ENCODE measurements at regions of chr1 and their contacts with region 1.

Region 1: GRCh38 chr1:91697416-91697815 is 188.5 kb downstream of the TGFBR3 start:
- DNase-seq: no peak
- ATAC-seq: no peak
- H3K4me3 ChIP-seq: no peak overlapping the region
- H3K27ac ChIP-seq: peak overlapping the region in 6 of 12 donors; percentile 23 to 78 (median 34)
- H3K4me1 ChIP-seq: peaks cover 0 to 85% (median 49%) of the 10 kb centered on the region in 12 donors
- H3K27me3 ChIP-seq: no peaks in the 10 kb centered on the region
- CTCF ChIP-seq: no peak
- POLR2A ChIP-seq: no peak

Region 2: GRCh38 chr1:91529856-91530255 is 167.6 kb before region 1 on chr1:
- intact Hi-C with region 1: loop called in 3 of 10 experiments (anchors 10 kb)
- DNase-seq: no peak
- ATAC-seq: peak in 2 of 4 donors; percentile 61 to 67
- H3K4me3 ChIP-seq: no peak overlapping the region
- H3K27ac ChIP-seq: no peak overlapping the region
- H3K4me1 ChIP-seq: peaks cover 0 to 9% (median 0%) of the 10 kb centered on the region in 12 donors
- H3K27me3 ChIP-seq: no peaks in the 10 kb centered on the region
- CTCF ChIP-seq: peak in 7 of 12 donors; percentile 21 to 58 (median 32)
- POLR2A ChIP-seq: no peak

Region 3: DNA sequence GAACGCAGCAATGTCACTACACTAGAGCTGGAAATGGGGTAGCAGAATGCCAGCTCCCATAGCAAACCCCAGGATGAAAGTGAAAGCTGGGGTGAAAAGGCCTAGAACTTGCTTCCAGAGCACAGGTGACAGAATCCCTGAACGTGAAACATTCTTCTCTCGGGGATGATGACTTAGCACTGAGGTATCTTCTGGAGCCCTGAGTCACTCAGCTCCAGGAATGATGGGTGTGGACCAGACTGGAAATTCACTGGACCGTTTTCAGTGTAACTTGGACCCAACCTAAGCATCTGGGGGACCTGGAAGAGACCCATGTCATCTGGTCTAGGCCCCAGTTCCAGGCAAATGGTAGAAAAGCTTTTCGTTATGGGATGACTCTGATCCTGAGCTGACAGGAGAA is 87.8 kb before region 1 on chr1:
- intact Hi-C with region 1: loop called in 1 of 10 experiments (anchors 10 kb)
- DNase-seq: no peak
- ATAC-seq: peak in 2 of 4 donors; percentile 23 to 39
- H3K4me3 ChIP-seq: no peak overlapping the region
- H3K27ac ChIP-seq: peak overlapping the region in 1 of 12 donors; percentile 30
- H3K4me1 ChIP-seq: peaks cover 0 to 14% (median 0%) of the 10 kb centered on the region in 12 donors
- H3K27me3 ChIP-seq: no peaks in the 10 kb centered on the region
- CTCF ChIP-seq: no peak
- POLR2A ChIP-seq: no peak

Region 4: DNA sequence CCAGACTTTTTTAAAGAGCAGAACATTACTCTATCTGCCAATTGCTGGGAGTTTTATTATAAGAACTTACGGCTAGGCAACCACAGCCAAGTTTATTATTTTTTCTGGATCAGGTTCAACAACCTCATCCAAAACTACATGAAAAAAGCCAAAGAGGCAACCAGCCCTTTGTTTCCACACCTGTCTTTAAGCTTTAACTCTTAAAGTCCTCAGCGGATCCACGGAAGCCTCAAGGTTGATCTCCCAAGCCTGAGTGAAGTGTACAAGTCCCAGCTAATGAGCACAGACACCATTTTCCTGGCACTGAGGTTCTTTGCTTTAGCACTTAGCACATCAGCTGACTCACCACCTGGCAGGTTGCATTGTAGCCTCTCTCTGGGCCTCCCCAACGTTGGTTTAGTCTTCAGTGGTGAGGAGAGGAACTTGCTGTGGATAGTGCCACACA is 45.5 kb after region 1 on chr1:
- intact Hi-C with region 1: loop called in 1 of 10 experiments (anchors 10 kb)
- DNase-seq: peak in 2 of 5 donors; percentile 56 to 66
- ATAC-seq: peak in 3 of 4 donors; percentile 25 to 65 (median 50)
- H3K4me3 ChIP-seq: no peak overlapping the region
- H3K27ac ChIP-seq: peak overlapping the region in 9 of 12 donors; percentile 13 to 77 (median 54)
- H3K4me1 ChIP-seq: peaks cover 0 to 61% (median 34%) of the 10 kb centered on the region in 12 donors
- H3K27me3 ChIP-seq: no peaks in the 10 kb centered on the region
- CTCF ChIP-seq: no peak
- POLR2A ChIP-seq: no peak